ENCODE measurements at regions of chr12 and their contacts with region 1.

Region 1: DNA sequence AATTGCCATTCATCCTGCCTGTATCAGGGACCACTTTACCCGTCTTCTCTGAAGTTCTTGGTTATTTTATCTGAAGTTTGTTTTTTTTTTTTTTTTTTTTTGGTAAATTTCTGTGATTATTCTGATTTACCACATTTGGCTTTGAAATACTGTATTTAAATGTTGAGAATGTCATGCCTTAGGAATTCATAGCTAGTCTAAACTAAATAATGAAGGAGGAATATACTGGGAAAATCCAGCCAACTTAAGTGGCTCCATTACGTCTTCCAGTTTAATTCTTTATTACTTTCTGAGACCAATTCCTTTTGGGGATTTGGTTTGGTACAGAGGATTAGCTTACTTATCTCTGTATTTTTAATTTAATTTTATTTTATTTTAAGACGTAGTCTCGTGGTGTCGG is 60.3 kb upstream of the KCNMB4 start:
- DNase-seq: no peak
- ATAC-seq: no peak
- H3K4me3 ChIP-seq: no peak overlapping the region
- H3K4me3 Mint-ChIP-seq: no peak overlapping the region
- H3K27ac ChIP-seq: no peak overlapping the region
- H3K27ac Mint-ChIP-seq: peak overlapping the region in 1 of 2 donors; percentile 68
- H3K4me1 ChIP-seq: peaks cover 0 to 16% of the 10 kb centered on the region in 2 experiments
- H3K4me1 Mint-ChIP-seq: peaks cover 53 to 67% (median 61%) of the 10 kb centered on the region in 3 donors
- H3K27me3 ChIP-seq: no peaks in the 10 kb centered on the region
- H3K27me3 Mint-ChIP-seq: no peaks in the 10 kb centered on the region

Region 2: GRCh38 chr12:70236990-70237389 is 68.8 kb before region 1 on chr12:
- CTCF ChIA-PET with region 1: no interaction called
- POLR2A ChIA-PET with region 1: interaction called in 1 of 2 experiments, 12 read pairs
- DNase-seq: no peak
- ATAC-seq: no peak
- H3K4me3 ChIP-seq: no peak overlapping the region
- H3K4me3 Mint-ChIP-seq: no peak overlapping the region
- H3K27ac ChIP-seq: no peak overlapping the region
- H3K27ac Mint-ChIP-seq: no peak overlapping the region
- H3K4me1 ChIP-seq: peaks cover 0 to 3% of the 10 kb centered on the region in 2 experiments
- H3K4me1 Mint-ChIP-seq: peaks cover 19 to 24% (median 20%) of the 10 kb centered on the region in 3 donors
- H3K27me3 ChIP-seq: no peaks in the 10 kb centered on the region
- H3K27me3 Mint-ChIP-seq: no peaks in the 10 kb centered on the region

Measured in T-cell (primary cell).